ENCODE measurements at regions of chr7 and their contacts with region 1.

Region 1: DNA sequence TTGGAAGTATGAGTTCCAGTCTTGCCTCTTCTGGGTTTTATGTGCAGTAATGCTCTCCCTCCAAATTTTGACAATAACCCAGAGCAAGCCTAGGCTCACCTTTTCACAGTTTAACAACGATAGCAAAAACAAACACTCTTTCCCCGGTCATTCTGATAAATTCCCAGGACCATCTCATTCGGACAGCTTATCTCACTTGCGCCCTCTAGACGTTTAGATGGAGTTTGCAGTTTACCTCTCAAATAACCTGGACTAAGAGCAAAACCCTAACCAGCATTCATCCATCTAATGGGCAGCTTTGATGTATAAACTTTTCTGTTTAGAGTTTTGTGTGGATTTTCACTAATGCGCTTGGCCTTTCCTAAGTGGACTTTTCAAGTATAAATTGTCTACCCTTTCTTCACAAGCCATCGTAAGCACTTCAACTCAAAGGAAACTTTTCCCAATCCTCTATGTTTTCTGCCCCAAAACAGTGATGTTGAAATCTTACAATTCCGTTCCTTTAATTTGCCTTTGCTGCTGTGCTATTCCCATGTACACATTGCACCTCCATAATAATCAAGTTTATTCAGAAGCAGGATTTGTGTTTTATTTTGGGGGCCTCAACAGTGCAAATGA is 114.9 kb downstream of the HDAC9 start:
- DNase-seq: peak in 1 of 2 experiments; percentile 7
- H3K4me3 ChIP-seq: no peak overlapping the region
- H3K27ac ChIP-seq: no peak overlapping the region
- H3K4me1 ChIP-seq: 0 out of 2 replicates have a peak, but pooled peaks cover 4% of the 10 kb centered on the region
- H3K27me3 ChIP-seq: no peaks in the 10 kb centered on the region
- CTCF ChIP-seq: peak; percentile 70

Region 2: DNA sequence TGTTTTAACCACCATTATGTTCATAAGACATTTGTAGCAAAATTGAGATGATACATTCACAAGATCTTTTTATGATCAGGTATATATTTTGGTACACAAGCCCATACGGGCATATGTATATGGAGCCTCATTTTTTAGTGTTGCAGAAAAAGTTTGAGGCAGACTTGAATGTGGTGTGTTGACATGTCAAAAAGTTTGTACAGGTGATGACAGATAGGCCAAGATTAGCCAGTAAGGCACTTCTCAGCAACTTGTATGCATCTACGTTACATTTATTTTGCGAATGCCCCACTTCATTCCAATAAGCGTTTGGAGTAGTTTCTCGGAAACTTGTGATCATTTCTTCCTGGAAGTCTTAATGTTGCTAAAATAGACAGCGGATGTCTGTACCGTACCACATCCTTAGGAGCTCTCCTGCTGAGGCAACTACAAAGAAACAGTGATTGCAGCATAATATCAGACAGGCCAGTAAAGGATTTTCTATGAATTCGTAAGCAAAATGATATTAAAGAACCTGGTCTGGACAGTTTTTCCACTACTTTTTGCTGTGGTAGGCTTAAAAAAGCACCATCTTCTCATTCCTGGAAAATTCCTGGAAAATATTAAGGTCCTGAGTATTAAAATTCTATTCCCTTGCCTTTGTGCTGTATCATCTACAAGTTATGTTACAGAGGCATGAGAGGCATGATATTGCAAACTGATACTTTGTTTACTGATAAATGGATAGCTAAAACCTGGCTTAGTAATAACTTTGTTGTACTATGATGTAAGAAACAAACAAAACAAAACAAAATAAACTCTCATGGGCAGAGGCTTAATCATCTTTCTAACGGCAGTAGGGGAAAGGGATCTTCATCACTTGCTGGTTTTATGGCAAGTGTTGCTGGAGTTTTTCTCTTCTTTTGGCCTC is 38.7 kb after region 1 on chr7:
- CTCF ChIA-PET with region 1: no interaction called
- POLR2A ChIA-PET with region 1: no interaction called
- intact Hi-C with region 1: loop called (anchors 1 kb)
- DNase-seq: peak in 1 of 2 experiments; percentile 77
- H3K4me3 ChIP-seq: no peak overlapping the region
- H3K27ac ChIP-seq: no peak overlapping the region
- H3K4me1 ChIP-seq: peaks cover 18% of the 10 kb centered on the region
- H3K27me3 ChIP-seq: no peaks in the 10 kb centered on the region
- CTCF ChIP-seq: no peak